Heart right ventricle (tissue), 16 donors: ENCODE measurements at regions of chr13 and their contacts with region 1.

Region 1: DNA sequence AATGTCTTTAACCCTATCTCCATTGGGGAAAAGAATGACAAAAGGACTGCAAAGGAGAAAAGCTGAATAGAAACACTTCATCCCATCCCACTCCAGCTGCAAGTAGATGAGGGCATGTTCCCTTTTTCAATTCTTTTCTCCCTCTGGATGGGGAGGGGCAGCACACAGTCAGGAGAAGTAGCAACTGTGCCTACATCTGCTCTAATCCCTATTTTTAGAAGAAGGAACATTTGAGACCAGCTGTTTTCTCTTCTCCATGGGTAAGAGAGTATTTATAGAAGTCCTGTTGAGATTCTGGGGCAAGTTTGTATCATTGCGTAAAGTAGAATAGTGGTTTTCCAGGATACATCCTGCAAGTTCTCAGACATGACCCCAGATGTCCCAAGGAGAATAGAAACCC is 9.3 kb upstream of the GTF3A start:
- DNase-seq: no peak
- ATAC-seq: peak; percentile 58 to 87 (median 78)
- H3K4me3 ChIP-seq: no peak overlapping the region
- H3K27ac ChIP-seq: no peak overlapping the region
- H3K4me1 ChIP-seq: peaks cover 0 to 18% (median 11%) of the 10 kb centered on the region in 9 donors
- H3K27me3 ChIP-seq: peaks cover 0 to 8% (median under 1%) of the 10 kb centered on the region in 7 donors
- CTCF ChIP-seq: no peak

Region 2: DNA sequence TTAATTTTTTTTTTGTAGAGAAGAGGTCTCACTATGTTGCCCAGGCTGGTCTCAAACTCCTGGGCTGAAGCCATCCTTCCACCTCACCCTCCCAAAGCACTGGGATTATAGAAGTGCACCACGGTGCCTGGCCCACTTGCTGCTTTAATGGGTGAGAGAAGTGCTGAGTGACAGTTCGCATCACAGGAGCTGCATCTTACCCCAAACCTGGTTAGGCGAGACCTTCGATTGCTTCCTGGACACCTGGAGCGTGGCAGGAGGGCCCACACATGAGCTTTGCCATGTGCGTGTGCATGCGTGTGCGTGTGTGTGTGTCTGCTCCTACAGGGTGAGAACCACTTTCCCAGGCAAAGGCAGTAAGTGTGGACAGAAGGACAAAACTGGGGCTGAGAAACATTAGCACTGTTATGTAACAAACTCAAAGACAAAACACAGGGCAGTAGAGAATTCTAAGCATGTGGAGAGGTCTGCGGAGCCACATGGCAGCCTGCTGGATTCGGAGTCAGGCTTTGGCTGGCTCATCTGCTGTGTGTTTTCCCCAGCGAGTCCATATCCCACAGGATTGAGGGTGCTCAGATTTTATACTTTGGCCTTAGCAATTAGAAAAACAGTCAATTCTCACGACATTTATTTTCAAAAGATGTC is 46.9 kb after region 1 on chr13:
- intact Hi-C with region 1: loop called in 1 of 10 experiments (anchors 10 kb)
- DNase-seq: no peak
- ATAC-seq: peak; percentile 56 to 85 (median 72)
- H3K4me3 ChIP-seq: no peak overlapping the region
- H3K27ac ChIP-seq: peak overlapping the region in 5 of 10 donors; percentile 16 to 57 (median 38)
- H3K4me1 ChIP-seq: peaks cover 0 to 19% (median 11%) of the 10 kb centered on the region in 9 donors
- H3K27me3 ChIP-seq: no peaks in the 10 kb centered on the region
- CTCF ChIP-seq: no peak

Region 3: GRCh38 chr13:27691207-27691606 is 276.1 kb after region 1 on chr13:
- intact Hi-C with region 1: no loop called
- DNase-seq: no peak
- ATAC-seq: no peak
- H3K4me3 ChIP-seq: no peak overlapping the region
- H3K27ac ChIP-seq: no peak overlapping the region
- H3K4me1 ChIP-seq: no peaks in the 10 kb centered on the region
- H3K27me3 ChIP-seq: no peaks in the 10 kb centered on the region
- CTCF ChIP-seq: no peak